ENCODE measurements at regions of chr15 and their contacts with region 1.

Region 1: GRCh38 chr15:72671535-72671934 is 14.4 kb downstream of the HIGD2B start:
- DNase-seq: no peak
- H3K4me3 ChIP-seq: no peak overlapping the region
- H3K27me3 ChIP-seq: no peaks in the 10 kb centered on the region
- CTCF ChIP-seq: no peak

Region 2: GRCh38 chr15:72599855-72600464 is 71.6 kb before region 1 on chr15:
- CTCF ChIA-PET with region 1: interaction called, 21 read pairs
- POLR2A ChIA-PET with region 1: no interaction called
- DNase-seq: peak; percentile 4
- H3K4me3 ChIP-seq: no peak overlapping the region
- H3K27me3 ChIP-seq: no peaks in the 10 kb centered on the region
- CTCF ChIP-seq: peak; percentile 68

Region 3: GRCh38 chr15:72685301-72685924 is 13.9 kb after region 1 on chr15:
- CTCF ChIA-PET with region 1: interaction called, 24 read pairs
- POLR2A ChIA-PET with region 1: no interaction called
- DNase-seq: no peak
- H3K4me3 ChIP-seq: peak overlapping the region; percentile 59
- H3K27me3 ChIP-seq: no peaks in the 10 kb centered on the region
- CTCF ChIP-seq: no peak